PC-3 (cell line): ENCODE measurements at regions of chr10 and their contacts with region 1.

Region 1: DNA sequence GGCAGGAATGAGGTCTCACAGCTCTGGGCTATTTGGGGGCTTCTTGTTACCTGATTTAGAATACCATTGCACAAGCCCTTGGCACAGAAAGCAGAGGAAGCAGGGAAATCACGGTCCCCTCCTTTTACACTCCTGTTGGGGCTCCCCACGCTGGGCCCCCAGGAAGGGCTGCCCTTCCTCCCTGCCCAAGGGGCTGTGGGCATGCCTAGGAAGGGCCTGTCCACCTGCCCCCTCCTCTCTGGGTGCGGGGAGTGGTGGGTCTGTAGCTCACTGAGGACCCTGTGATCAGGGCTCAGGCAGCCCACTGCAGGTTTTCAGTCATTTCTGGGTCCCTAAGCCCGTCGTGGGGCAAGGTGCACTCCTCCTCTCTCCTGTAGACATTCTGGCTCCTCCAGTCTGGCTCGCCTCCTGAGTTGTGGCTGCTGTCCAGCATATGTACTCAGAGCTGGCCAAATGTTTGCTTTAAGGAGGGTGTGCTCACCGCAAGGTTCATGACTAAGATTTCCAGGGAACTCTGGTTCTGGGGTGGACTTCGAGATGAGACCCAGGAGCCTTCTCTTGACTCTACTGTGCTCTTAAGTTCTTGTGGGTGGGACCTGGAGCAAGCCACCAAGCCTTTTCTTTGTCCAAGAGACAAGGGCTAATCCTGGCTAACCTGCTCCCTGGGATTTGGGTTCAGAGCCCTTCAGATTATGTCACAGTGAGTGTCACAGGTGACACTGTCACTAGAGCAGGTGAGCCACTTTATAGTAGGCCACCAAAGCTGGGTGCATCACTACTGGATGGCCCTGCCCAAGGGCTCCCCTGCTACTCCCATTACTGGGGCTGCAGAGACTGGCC is 56.0 kb downstream of the TACR2 start:
- DNase-seq: peak; percentile 100
- ATAC-seq: peak; percentile 89
- H3K4me3 ChIP-seq: peak overlapping the region; percentile 8
- H3K27ac ChIP-seq: peak overlapping the region; percentile 91
- H3K4me1 ChIP-seq: peaks cover 44% of the 10 kb centered on the region
- H3K27me3 ChIP-seq: no peaks in the 10 kb centered on the region
- CTCF ChIP-seq: no peak

Region 2: GRCh38 chr10:68756766-68757165 is 603.9 kb before region 1 on chr10:
- CTCF ChIA-PET with region 1: no interaction called
- POLR2A ChIA-PET with region 1: no interaction called
- intact Hi-C with region 1: no loop called
- DNase-seq: no peak
- ATAC-seq: no peak
- H3K4me3 ChIP-seq: no peak overlapping the region
- H3K27ac ChIP-seq: no peak overlapping the region
- H3K4me1 ChIP-seq: no peaks in the 10 kb centered on the region
- H3K27me3 ChIP-seq: no peaks in the 10 kb centered on the region
- CTCF ChIP-seq: no peak

Region 3: GRCh38 chr10:69348816-69349541 is 11.7 kb before region 1 on chr10:
- CTCF ChIA-PET with region 1: no interaction called
- POLR2A ChIA-PET with region 1: no interaction called
- intact Hi-C with region 1: loop called (anchors 1 kb)
- DNase-seq: peak; percentile 99
- ATAC-seq: peak; percentile 82
- H3K4me3 ChIP-seq: peak overlapping the region; percentile 5; the same call in 1 of the 2 replicates
- H3K27ac ChIP-seq: peak overlapping the region; percentile 89
- H3K4me1 ChIP-seq: peaks cover 44% of the 10 kb centered on the region
- H3K27me3 ChIP-seq: no peaks in the 10 kb centered on the region
- CTCF ChIP-seq: no peak